MCF 10A (cell line): ENCODE measurements at regions of chr15 and their contacts with region 1.

Region 1: GRCh38 chr15:58749532-58750337 is at the start of gene ADAM10:
- DNase-seq: peak; percentile 99
- H3K4me3 Mint-ChIP-seq: peak within 1 kb of the TSS; percentile 96
- H3K27ac Mint-ChIP-seq: peak within 1 kb of the TSS; percentile 90
- H3K4me1 Mint-ChIP-seq: peaks cover 24% of the 10 kb centered on the region
- H3K27me3 Mint-ChIP-seq: no peaks in the 10 kb centered on the region
- CTCF ChIP-seq: no peak
- total RNA-seq, gene ADAM10: 87.5 and 109 TPM in 2 replicates

Region 2: GRCh38 chr15:58671186-58671585 is 78.5 kb before region 1 on chr15:
- CTCF ChIA-PET with region 1: no interaction called
- POLR2A ChIA-PET with region 1: interaction called, 14 read pairs
- intact Hi-C with region 1: no loop called
- DNase-seq: no peak
- H3K4me3 Mint-ChIP-seq: no peak overlapping the region
- H3K27ac Mint-ChIP-seq: no peak overlapping the region
- H3K4me1 Mint-ChIP-seq: peaks cover 6% of the 10 kb centered on the region
- H3K27me3 Mint-ChIP-seq: no peaks in the 10 kb centered on the region
- CTCF ChIP-seq: no peak

Region 3: GRCh38 chr15:58690703-58691102 is 59.0 kb before region 1 on chr15:
- CTCF ChIA-PET with region 1: no interaction called
- POLR2A ChIA-PET with region 1: no interaction called
- intact Hi-C with region 1: no loop called
- DNase-seq: no peak
- H3K4me3 Mint-ChIP-seq: no peak overlapping the region
- H3K27ac Mint-ChIP-seq: no peak overlapping the region
- H3K4me1 Mint-ChIP-seq: peaks cover 6% of the 10 kb centered on the region
- H3K27me3 Mint-ChIP-seq: no peaks in the 10 kb centered on the region
- CTCF ChIP-seq: no peak

Region 4: DNA sequence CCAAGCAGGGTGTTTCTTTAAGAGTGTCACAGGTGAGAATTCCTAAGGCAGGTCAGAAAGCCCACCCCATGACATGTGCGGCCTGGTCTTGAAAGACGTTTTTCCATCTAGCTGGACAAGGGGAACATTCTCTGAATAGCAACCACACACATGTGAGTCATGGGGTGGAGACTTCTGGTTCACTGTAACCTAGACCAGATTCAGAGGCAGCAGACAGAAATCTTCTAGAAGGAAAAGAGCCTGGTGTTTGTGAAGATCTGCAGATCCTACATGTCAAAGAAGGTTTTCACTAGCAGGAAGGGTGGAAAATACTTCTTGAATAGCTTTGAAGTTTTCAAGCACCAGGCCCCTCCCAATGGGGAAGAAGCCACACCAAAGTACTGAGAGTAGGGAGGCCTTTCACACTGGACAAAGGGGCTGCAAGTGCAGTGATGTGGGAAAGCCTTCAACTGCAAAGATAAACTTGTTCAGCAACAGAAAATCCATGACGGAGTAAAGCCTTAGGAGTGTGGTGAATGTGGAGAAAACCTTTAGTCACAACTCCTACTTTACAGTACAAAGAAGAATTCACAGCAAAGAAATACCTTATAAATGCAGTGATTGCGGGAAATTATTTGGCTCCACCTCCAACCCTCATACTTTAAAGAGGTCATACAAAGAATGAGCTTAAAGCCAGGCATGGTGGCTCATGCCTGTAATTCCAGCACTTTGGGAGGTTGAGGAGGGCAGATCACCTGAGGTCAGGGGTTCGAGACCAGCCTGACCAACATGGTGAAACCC is 17.8 kb before region 1 on chr15:
- CTCF ChIA-PET with region 1: interaction called, 3 read pairs
- POLR2A ChIA-PET with region 1: interaction called, 119 read pairs
- intact Hi-C with region 1: no loop called
- DNase-seq: peak; percentile 64
- H3K4me3 Mint-ChIP-seq: peak overlapping the region; percentile 37
- H3K27ac Mint-ChIP-seq: peak overlapping the region; percentile 83
- H3K4me1 Mint-ChIP-seq: peaks cover 40% of the 10 kb centered on the region
- H3K27me3 Mint-ChIP-seq: no peaks in the 10 kb centered on the region
- CTCF ChIP-seq: no peak

Region 5: GRCh38 chr15:58793862-58794261 is 44.1 kb after region 1 on chr15:
- CTCF ChIA-PET with region 1: no interaction called
- POLR2A ChIA-PET with region 1: interaction called, 36 read pairs
- intact Hi-C with region 1: no loop called
- DNase-seq: peak; percentile 87
- H3K4me3 Mint-ChIP-seq: peak overlapping the region; percentile 46
- H3K27ac Mint-ChIP-seq: peak overlapping the region; percentile 98
- H3K4me1 Mint-ChIP-seq: peaks cover 29% of the 10 kb centered on the region
- H3K27me3 Mint-ChIP-seq: no peaks in the 10 kb centered on the region
- CTCF ChIP-seq: no peak